ENCODE measurements at regions of chr2 and their contacts with region 1.

Region 1: DNA sequence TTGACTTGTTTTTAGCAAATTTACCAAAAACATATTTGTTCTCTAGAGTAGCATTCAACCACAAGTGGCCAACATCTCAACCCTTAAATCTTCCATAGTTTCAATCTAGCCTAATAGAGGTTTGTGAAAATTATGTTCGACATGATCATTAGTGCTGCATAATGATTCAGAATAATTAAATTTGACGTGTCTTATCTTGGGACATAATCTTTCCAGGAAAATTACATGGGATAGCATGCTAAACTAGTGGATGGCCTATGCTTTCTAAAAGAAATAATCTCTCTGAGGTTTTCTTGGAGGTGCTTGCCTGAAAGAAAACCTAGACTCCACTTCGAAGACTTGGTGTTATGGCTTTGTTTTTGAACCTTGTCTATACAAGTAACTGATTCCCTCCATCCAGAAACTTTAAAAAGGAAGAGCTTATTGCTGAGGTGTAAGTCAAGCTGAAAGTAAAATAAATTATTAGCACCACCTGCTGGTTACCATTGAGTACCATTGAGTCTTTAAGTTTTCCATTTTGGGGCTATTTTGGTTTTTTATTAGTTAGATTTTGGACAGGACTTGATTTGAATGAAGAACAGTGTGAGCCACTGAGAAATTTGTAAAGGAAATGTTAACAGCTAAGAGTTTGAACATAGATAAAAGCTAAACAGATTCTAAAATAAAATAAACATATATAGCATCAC is 32.7 kb downstream of the COX7A2L start:
- DNase-seq: peak; percentile 25
- CTCF ChIP-seq: peak; percentile 44

Region 2: DNA sequence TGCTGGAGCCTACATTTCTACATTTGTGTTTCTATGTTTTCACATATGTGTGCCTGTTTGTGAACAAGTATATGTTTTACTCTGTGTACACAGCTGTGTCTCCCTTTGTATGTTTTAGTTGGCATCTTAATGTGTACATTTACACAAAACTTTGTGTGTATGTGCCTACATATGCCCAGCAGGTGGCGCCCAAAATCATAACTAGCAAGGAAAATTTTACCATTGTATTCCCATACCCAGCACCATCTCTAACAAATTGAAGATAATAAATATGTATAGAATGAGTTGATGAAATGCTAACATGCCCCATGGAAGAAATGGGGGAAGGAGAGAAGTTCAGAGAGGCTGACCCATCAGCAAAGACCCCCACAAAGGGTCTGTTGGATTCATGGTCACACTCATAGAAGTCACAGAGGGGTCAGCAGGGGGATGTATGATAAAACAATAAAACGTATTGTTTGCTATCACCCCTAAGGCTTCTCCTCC is 232.3 kb before region 1 on chr2:
- in situ Hi-C with region 1: loop called (anchors 10 kb)
- DNase-seq: no peak
- CTCF ChIP-seq: peak; percentile 74

Region 3: DNA sequence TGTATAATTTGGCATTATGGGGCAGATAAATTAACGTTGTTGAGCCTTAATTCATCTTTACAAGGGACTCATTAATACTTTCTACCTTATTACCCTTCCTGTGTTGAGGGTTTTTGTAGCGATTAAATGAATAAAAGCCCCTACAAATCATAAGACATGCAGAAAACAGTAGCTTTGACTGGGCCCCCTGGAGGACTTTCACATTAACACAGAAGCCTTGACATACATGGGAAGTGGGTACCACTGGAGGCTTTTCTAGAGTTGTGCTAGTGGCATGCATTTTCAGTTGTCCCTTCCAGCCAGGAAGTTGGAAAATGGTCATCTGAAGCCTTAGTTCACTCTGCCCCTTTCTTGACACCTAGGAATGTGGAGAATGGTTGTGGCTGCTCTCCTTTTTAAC is 270.4 kb after region 1 on chr2:
- in situ Hi-C with region 1: no loop called
- DNase-seq: no peak
- CTCF ChIP-seq: no peak